ENCODE measurements at regions of chr20 and their contacts with region 1.

Region 1: GRCh38 chr20:31951530-31952453 is at the start of gene PDRG1:
- DNase-seq: peak; percentile 99
- H3K4me3 Mint-ChIP-seq: peak within 1 kb of the TSS; percentile 82
- H3K27ac Mint-ChIP-seq: peak within 1 kb of the TSS; percentile 91
- H3K4me1 Mint-ChIP-seq: peaks cover 20% of the 10 kb centered on the region
- H3K27me3 Mint-ChIP-seq: peaks cover 43% of the 10 kb centered on the region
- CTCF ChIP-seq: peak; percentile 90
- total RNA-seq, gene PDRG1: 21.4 and 24.5 TPM in 2 replicates

Region 2: GRCh38 chr20:31822421-31823330 is 129.1 kb before region 1 on chr20:
- CTCF ChIA-PET with region 1: interaction called, 14 read pairs
- intact Hi-C with region 1: loop called (anchors 2 kb)
- DNase-seq: peak; percentile 88
- H3K4me3 Mint-ChIP-seq: peak overlapping the region; percentile 35
- H3K27ac Mint-ChIP-seq: no peak overlapping the region
- H3K4me1 Mint-ChIP-seq: no peaks in the 10 kb centered on the region
- H3K27me3 Mint-ChIP-seq: no peaks in the 10 kb centered on the region
- CTCF ChIP-seq: peak; percentile 100

Region 3: GRCh38 chr20:31849455-31849925 is 102.3 kb before region 1 on chr20:
- CTCF ChIA-PET with region 1: interaction called, 36 read pairs
- intact Hi-C with region 1: loop called (anchors 2 kb)
- DNase-seq: peak; percentile 75
- H3K4me3 Mint-ChIP-seq: peak overlapping the region; percentile 31
- H3K27ac Mint-ChIP-seq: no peak overlapping the region
- H3K4me1 Mint-ChIP-seq: peaks cover 9% of the 10 kb centered on the region
- H3K27me3 Mint-ChIP-seq: peaks cover 46% of the 10 kb centered on the region
- CTCF ChIP-seq: no peak

Region 4: GRCh38 chr20:32018269-32019074 is 66.7 kb after region 1 on chr20:
- CTCF ChIA-PET with region 1: interaction called, 11 read pairs
- intact Hi-C with region 1: no loop called
- DNase-seq: peak; percentile 95
- H3K4me3 Mint-ChIP-seq: peak overlapping the region; percentile 88
- H3K27ac Mint-ChIP-seq: peak overlapping the region; percentile 29
- H3K4me1 Mint-ChIP-seq: no peaks in the 10 kb centered on the region
- H3K27me3 Mint-ChIP-seq: peaks cover 95% of the 10 kb centered on the region
- CTCF ChIP-seq: no peak

Region 5: DNA sequence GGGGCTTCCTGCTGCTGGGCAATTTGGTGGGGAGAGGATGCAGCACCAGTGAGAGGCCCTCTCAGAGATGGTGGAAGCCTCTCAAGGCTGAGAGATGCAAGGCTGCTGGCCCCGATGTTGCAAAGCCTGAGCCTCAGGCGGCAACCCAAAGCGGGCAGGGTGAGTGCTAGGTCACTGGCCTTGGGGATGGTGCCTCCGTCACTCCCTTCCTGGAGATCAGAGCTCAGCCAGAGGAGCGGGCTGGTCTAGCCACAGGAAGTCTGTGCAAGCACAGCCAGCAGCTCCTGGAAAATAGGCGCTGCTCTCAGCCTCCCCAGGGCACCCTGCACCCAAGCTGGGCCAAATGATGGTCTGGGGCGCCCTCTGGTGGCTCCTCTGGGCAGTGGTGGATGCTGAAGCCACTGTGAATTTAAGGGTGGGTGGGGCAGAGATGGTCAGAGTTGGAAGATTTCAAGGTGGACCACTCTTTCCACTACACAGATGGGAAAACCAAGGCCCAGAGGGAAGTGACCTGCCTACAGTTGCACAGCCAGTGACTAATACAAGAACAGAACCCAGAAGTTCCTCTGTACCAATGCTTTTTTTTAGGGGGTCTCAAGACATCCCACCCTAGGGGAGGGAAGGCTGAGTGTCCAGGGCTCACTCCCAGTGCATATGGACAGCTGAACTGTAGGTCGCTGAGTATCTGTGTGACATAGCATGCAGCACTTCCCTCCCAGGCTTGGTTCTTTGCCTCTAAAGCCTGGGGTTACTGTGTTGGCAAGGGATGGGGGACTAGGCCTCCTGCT is 701.1 kb after region 1 on chr20:
- CTCF ChIA-PET with region 1: no interaction called
- intact Hi-C with region 1: loop called (anchors 10 kb)
- DNase-seq: peak; percentile 95
- H3K4me3 Mint-ChIP-seq: no peak overlapping the region
- H3K27ac Mint-ChIP-seq: no peak overlapping the region
- H3K4me1 Mint-ChIP-seq: peaks cover 8% of the 10 kb centered on the region
- H3K27me3 Mint-ChIP-seq: peaks cover 46% of the 10 kb centered on the region
- CTCF ChIP-seq: peak; percentile 99